Activated T-helper 1 cell treated with anti-CD3 and anti-CD28 coated beads, Interleukin-12 subunit alpha, Interleukin-12 subunit beta, Interleukin-2, Interleukin-4 antibody, amounts not matched to agents 30 ng/mL and 10 ng/mL and 1 ng/mL, durations not matched to agents 14 hours and 24 hours and 36 hours (primary cell): ENCODE measurements at regions of chr6 and their contacts with region 1.

Region 1: GRCh38 chr6:28136585-28137504 is 4.8 kb upstream of the ZKSCAN8 start:
- DNase-seq: peak; percentile 65
- H3K4me3 Mint-ChIP-seq: peak overlapping the region; percentile 95
- H3K27ac Mint-ChIP-seq: peak overlapping the region; percentile 91
- H3K4me1 Mint-ChIP-seq: peaks cover 78% of the 10 kb centered on the region
- H3K27me3 Mint-ChIP-seq: no peaks in the 10 kb centered on the region

Region 2: DNA sequence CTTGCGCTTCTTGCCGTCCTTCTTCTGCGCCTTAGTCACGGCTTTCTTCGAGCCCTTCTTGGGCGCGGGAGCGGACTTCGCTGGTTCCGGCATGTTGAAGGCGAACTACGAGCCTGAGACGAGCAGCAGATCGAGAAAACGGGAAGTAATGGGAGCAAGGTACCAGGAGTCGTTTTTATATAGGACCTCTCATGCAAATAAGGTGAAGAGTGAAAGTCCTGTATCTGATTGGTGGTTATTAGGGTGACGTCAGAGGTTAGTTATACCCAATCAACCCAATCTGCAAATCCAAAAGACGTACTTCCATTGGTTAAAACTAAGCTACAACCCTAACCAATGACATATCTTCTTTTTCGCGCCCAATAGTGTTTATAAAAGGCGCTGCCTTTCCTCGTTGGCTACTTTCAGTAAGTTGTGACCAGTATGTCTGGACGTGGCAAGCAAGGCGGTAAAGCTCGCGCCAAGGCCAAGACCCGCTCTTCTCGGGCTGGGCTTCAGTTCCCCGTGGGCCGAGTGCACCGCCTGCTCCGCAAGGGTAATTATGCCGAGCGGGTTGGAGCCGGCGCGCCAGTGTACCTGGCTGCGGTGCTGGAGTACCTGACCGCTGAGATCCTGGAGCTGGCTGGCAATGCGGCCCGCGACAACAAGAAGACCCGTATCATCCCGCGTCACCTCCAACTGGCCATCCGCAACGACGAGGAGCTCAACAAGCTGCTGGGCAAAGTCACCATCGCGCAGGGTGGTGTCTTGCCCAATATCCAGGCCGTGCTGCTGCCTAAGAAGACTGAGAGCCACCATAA is 989.9 kb before region 1 on chr6:
- intact Hi-C with region 1: loop called (anchors 10 kb)
- DNase-seq: peak; percentile 82
- H3K4me3 Mint-ChIP-seq: no peak overlapping the region
- H3K27ac Mint-ChIP-seq: no peak overlapping the region
- H3K4me1 Mint-ChIP-seq: peaks cover 17% of the 10 kb centered on the region
- H3K27me3 Mint-ChIP-seq: no peaks in the 10 kb centered on the region

Region 3: DNA sequence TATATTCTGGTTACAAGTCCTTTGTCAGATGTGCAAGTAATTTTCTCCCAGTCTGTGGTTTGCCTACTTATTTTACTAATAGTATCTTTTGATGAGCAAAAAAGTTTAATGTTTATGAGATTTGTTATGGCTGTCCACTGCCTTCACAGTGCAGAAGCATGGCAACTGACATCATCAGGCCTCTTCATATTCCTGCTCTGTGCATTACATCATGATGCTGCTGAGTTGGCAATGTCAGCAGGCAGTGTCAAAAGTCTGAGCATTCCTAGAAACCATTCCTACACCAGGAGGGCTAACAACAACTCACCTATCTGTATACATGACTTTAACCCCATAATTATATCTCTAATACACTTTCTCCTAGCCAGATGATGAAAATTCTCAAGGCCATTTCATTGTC is 213.9 kb before region 1 on chr6:
- intact Hi-C with region 1: no loop called
- DNase-seq: no peak
- H3K4me3 Mint-ChIP-seq: no peak overlapping the region
- H3K27ac Mint-ChIP-seq: no peak overlapping the region
- H3K4me1 Mint-ChIP-seq: no peaks in the 10 kb centered on the region
- H3K27me3 Mint-ChIP-seq: peaks cover 23% of the 10 kb centered on the region

Region 4: GRCh38 chr6:28080631-28081485 is 56.0 kb before region 1 on chr6:
- intact Hi-C with region 1: loop called (anchors 1 kb)
- DNase-seq: peak; percentile 82
- H3K4me3 Mint-ChIP-seq: peak overlapping the region; percentile 96
- H3K27ac Mint-ChIP-seq: peak overlapping the region; percentile 96
- H3K4me1 Mint-ChIP-seq: peaks cover 21% of the 10 kb centered on the region
- H3K27me3 Mint-ChIP-seq: peaks cover 2% of the 10 kb centered on the region

Region 5: DNA sequence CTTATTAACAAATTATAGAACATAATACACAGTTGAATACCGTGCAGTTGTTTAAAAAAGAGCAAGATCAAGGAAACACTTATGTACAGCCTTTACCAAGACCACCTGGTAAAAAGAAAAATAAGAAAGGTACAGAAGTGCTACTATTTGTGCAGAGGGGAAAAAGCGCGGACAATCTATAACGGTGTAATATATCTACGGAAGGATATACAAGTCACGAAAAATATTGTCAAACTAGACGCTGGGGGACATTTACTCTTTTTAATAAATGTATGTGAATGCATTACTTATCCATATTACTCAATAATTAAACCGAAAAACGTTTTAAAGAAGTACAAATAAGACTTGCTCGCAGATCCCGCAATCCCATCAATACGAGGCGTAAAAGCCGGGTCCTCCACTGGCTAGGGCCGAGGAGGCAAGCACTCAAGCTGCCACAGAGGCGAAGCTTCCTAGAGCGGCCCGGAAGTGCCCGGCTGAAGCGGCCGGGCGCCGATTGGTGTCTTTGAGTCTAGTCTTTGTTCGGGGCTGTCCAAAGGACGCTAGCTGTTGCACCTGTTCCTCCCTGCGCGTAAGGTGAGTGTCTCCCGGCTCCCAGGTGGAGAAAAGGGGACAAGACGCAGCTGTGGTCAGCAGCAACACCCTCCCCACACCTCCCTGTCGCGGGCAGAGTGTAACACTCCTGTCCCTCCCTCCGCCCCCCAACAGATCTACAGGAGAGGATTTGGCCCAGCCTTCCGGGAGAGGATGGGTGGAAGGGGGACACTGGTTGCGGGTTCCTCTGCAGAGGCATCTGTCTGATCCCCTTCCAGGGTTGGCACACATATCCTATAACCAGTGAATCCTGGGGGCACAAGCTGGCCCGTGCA is 12.5 kb before region 1 on chr6 and contains the start of gene ZSCAN16:
- intact Hi-C with region 1: loop called (anchors 1 kb)
- DNase-seq: peak; percentile 66
- H3K4me3 Mint-ChIP-seq: peak within 1 kb of the TSS; percentile 95
- H3K27ac Mint-ChIP-seq: peak within 1 kb of the TSS; percentile 86
- H3K4me1 Mint-ChIP-seq: peaks cover 41% of the 10 kb centered on the region
- H3K27me3 Mint-ChIP-seq: no peaks in the 10 kb centered on the region
- total RNA-seq, gene ZSCAN16: 4.8 TPM in 2 replicates

Region 6: DNA sequence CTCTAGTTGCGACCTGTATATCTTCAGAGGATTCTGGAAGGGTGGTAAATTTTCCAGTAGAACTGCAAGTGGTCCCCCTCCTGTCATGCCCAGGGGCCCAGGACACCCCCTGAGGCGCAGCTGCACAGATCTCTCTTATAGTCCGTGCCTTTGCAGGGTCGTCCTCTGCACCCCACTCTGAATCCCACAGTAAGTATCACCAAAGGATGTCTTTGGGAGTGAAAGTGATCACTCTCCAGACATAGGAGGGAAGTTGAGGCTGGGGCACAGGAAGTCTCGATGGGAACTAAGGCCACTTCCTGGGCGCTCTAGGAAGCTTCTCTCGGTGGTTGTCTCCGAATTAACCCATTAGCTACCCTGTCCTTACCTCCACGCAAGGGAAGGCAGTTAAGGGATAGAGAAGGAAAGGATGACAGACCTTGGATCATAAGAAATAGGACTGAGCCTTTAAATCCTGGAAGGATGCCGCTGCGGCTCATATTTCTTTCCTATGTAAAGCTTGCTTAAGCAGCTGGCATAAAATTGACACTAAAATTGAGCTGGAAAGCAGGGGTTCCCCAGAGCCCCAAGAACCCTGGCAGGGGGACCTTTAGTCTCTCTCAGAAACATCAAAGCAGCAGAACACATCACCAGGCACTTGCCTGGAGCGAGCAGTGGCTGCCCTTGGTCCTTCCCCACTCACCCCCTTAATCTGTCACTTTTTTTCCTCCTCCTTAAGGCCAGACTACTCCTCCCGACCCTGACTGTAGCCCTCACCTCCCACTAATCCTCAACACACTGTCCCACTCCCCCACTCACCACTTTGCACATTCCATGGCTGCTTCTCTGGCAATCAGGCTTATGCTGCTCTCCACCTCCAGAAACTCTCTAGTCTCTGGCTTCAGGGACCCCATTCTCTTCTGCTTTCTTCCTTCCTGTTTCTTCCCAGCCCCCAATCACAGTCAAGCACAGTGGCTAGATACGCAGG is 115.4 kb after region 1 on chr6 and contains the start of gene ZKSCAN4:
- intact Hi-C with region 1: loop called (anchors 1 kb)
- DNase-seq: peak; percentile 72
- H3K4me3 Mint-ChIP-seq: peak within 1 kb of the TSS; percentile 99
- H3K27ac Mint-ChIP-seq: peak within 1 kb of the TSS; percentile 89
- H3K4me1 Mint-ChIP-seq: peaks cover 26% of the 10 kb centered on the region
- H3K27me3 Mint-ChIP-seq: peaks cover 3% of the 10 kb centered on the region
- total RNA-seq, gene ZKSCAN4: 4.8 and 6.0 TPM in 2 replicates

Region 7: DNA sequence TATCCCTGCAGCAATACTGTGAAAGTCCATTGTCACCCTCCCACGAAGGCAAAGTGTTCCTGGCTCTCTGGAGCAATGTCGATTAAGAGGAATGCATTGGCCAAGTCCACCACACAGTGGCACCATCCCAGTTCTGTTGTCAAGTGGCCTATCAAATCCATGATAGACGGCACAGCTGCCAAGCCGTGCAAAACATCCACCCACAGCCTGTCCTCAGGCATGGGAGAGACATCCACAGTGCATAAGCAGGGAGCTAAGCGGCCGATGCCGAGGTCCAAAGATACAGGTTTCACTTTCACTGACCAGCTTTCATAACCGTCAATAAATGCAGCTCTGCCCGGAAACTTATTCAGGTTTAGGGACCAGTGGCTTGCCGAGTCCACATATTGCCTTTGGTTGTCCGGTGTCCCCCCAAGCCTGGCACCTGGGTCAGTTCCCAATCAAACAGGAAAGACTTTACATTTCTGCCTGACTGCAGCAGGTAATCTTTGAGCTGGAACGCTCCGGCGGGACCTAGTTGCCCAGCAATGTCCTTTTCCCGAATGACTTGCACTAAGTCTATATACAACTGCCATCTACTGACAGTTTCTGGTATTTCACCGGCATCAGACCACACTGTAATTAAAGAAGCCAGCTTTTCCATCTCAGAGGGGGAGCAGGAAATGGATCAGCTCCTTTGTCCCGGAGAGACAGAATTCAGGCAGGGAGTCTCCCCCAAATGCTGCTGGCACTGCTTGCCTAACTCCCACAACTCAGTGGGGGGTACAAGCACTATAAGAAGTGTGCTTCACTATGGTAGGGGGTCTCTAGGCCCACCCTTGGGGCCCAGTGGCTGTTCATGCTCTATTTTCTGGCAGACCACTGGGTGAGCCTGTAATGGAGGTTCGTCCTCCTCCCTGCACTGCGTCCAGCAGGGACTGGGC is 219.2 kb after region 1 on chr6:
- intact Hi-C with region 1: loop called (anchors 1 kb)
- DNase-seq: peak; percentile 48
- H3K4me3 Mint-ChIP-seq: peak overlapping the region; percentile 86
- H3K27ac Mint-ChIP-seq: peak overlapping the region; percentile 72
- H3K4me1 Mint-ChIP-seq: peaks cover 25% of the 10 kb centered on the region
- H3K27me3 Mint-ChIP-seq: no peaks in the 10 kb centered on the region

Region 8: GRCh38 chr6:28586962-28587745 is 450.3 kb after region 1 on chr6:
- intact Hi-C with region 1: loop called (anchors 10 kb)
- DNase-seq: peak; percentile 49
- H3K4me3 Mint-ChIP-seq: peak overlapping the region; percentile 83
- H3K27ac Mint-ChIP-seq: no peak overlapping the region
- H3K4me1 Mint-ChIP-seq: peaks cover 43% of the 10 kb centered on the region
- H3K27me3 Mint-ChIP-seq: peaks cover 53% of the 10 kb centered on the region